Posterior vena cava (tissue), 2 donors: ENCODE measurements at regions of chr3 and their contacts with region 1.

Region 1: GRCh38 chr3:150721285-150722130 is 17.8 kb upstream of the ERICH6 start:
- DNase-seq: no peak

Region 2: DNA sequence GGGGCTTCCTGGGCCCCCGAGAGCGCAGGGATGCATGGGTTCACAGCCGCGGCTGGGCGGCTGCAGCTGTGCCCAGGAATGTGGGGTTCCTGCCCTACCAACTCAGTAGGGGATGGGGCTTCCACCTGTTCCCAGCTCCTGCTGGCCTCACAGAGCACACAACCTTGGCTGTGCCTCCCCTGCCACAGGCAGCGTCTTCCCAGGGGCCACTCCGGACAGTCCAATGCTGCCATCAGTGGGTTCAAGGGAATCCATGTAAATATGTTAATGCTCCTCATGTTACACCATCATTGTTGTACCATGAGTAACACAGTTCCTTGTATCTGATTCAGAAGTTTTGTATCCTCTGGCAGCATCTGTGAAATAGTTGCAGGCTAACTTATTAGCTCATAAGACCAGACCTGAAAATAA is 53.6 kb after region 1 on chr3:
- intact Hi-C with region 1: loop called in 1 of 2 experiments (anchors 5 kb)
- DNase-seq: no peak

Region 3: DNA sequence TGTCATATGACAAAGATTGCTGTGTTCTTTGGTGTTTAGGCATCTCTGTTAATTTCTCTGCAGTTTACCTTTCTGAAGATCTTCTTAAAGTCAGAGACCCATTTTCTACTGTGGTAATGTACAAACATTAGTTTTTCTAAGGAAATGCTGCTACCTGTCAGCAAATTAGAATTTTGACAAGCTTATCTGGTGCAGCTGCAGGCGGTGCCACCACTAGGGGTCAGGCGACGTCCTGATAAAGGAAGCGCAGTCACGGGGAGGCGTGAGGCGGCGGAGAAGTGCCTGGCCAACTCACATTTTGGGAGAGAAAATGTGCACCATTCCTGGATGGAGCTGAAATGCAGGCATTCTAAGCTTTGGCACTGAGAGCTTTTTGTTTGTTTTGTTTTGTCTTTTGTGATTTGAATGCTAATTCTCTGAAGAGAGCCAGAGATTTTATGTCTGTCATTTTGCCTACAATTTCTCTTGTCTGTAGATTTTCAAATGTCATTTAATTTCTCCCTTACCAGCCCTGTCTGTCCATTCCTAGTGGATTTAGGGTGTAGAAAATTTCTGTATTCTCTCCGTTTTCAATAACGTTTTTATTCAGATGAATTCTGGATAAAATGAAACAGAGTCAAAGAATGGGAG is 66.3 kb after region 1 on chr3:
- intact Hi-C with region 1: loop called in 1 of 2 experiments (anchors 2 kb)
- DNase-seq: peak; percentile 96